ENCODE measurements at regions of chr19 and their contacts with region 1.

Region 1: DNA sequence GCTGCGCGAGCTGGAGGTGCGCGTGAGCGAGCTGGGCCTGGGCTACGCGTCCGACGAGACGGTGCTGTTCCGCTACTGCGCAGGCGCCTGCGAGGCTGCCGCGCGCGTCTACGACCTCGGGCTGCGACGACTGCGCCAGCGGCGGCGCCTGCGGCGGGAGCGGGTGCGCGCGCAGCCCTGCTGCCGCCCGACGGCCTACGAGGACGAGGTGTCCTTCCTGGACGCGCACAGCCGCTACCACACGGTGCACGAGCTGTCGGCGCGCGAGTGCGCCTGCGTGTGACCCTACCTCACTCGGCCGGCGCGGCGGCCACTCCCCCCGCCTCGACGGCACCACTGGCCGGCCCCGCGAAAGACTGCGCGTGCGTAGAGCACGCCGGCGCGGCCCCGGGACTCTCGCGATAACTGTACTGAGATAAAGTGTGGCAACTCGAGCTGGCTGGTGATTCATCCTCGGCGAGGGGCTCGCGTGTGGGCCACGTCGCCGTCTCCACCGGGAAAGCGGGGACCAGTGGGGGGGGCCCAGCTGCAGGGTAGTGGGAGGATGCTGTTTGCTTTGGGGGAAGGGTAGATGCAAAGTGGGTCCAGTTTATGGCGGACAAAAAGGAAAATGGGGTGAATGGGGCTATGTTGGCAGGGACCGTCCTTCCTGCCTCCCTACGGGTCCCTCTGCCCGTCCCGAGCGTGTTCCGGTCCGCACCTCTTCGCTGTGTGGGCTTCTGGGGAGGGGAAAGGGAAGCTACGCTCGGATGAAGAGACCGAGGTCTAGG is 11.4 kb downstream of the FUT6 start:
- DNase-seq: peak; percentile 87 to 97 (median 94)
- ATAC-seq: peak; percentile 81 to 84
- H3K4me3 Mint-ChIP-seq: peak overlapping the region; percentile 93 to 100 (median 97)
- H3K27ac Mint-ChIP-seq: peak overlapping the region; percentile 94 to 100 (median 98)
- H3K4me1 Mint-ChIP-seq: peaks cover 10 to 22% (median 19%) of the 10 kb centered on the region in 4 donors
- H3K27me3 Mint-ChIP-seq: no peaks in the 10 kb centered on the region

Region 2: GRCh38 chr19:5790573-5791520 is 37.2 kb before region 1 on chr19 and contains the start of gene DUS3L:
- POLR2A ChIA-PET with region 1: interaction called, 13 read pairs
- DNase-seq: peak; percentile 90 to 98 (median 95)
- ATAC-seq: peak; percentile 92 to 93
- H3K4me3 Mint-ChIP-seq: peak within 1 kb of the TSS; percentile 92 to 100 (median 99)
- H3K27ac Mint-ChIP-seq: peak within 1 kb of the TSS; percentile 99 to 100 (median 100)
- H3K4me1 Mint-ChIP-seq: peaks cover 13 to 21% (median 16%) of the 10 kb centered on the region in 4 donors
- H3K27me3 Mint-ChIP-seq: peaks cover 0 to 2% (median 0%) of the 10 kb centered on the region in 5 donors
- polyA plus RNA-seq, gene DUS3L: 26.3 to 43.2 (median 41.1) TPM

Region 3: GRCh38 chr19:5809053-5809452 is 19.0 kb before region 1 on chr19:
- POLR2A ChIA-PET with region 1: interaction called, 23 read pairs
- DNase-seq: no peak
- ATAC-seq: no peak
- H3K4me3 Mint-ChIP-seq: no peak overlapping the region
- H3K27ac Mint-ChIP-seq: no peak overlapping the region
- H3K4me1 Mint-ChIP-seq: peaks cover 5 to 8% (median 6%) of the 10 kb centered on the region in 4 donors
- H3K27me3 Mint-ChIP-seq: no peaks in the 10 kb centered on the region

Region 4: DNA sequence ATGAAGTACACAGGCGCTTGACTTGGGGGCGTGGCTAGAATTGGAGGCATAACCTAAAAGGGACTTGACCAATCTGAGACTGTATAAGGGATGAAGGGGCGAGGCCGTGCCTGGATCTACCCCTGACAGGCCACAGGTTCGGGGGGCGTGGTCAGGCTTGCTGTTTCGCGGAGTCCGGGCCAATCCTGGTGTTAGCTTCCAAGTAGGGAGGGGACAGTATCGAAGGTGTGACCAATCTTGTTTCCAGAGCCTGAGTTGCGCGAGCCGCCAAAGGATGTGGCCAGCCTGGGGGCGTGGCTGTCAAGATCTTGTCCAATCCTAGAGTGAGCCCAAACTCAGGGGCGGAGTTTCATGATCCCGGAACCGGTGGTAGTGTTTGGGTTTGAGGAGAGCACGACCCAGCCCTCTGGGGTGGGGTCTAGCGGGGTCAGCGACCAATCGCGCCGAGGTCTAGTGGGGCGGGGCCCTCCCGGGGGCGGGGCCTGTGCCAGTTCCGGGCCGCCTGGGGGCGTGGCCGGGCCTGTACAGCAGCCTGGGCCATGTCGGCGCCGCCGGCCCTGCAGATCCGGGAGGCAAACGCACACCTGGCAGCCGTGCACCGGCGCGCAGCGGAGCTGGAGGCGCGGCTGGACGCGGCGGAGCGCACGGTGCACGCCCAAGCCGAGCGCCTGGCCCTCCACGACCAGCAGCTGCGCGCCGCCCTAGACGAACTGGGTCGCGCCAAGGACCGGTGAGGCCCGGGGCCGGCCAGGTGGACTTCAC is 76.5 kb after region 1 on chr19 and contains the start of gene VMAC:
- POLR2A ChIA-PET with region 1: interaction called, 71 read pairs
- DNase-seq: peak; percentile 99 to 100 (median 100)
- ATAC-seq: peak; percentile 77 to 80
- H3K4me3 Mint-ChIP-seq: peak within 1 kb of the TSS; percentile 91 to 99 (median 97)
- H3K27ac Mint-ChIP-seq: peak within 1 kb of the TSS; percentile 98 to 100 (median 99)
- H3K4me1 Mint-ChIP-seq: peaks cover 19 to 57% (median 43%) of the 10 kb centered on the region in 4 donors
- H3K27me3 Mint-ChIP-seq: peaks cover 0 to 2% (median 0%) of the 10 kb centered on the region in 5 donors
- polyA plus RNA-seq, gene VMAC: 6.2 to 8.4 (median 7.0) TPM

Region 5: DNA sequence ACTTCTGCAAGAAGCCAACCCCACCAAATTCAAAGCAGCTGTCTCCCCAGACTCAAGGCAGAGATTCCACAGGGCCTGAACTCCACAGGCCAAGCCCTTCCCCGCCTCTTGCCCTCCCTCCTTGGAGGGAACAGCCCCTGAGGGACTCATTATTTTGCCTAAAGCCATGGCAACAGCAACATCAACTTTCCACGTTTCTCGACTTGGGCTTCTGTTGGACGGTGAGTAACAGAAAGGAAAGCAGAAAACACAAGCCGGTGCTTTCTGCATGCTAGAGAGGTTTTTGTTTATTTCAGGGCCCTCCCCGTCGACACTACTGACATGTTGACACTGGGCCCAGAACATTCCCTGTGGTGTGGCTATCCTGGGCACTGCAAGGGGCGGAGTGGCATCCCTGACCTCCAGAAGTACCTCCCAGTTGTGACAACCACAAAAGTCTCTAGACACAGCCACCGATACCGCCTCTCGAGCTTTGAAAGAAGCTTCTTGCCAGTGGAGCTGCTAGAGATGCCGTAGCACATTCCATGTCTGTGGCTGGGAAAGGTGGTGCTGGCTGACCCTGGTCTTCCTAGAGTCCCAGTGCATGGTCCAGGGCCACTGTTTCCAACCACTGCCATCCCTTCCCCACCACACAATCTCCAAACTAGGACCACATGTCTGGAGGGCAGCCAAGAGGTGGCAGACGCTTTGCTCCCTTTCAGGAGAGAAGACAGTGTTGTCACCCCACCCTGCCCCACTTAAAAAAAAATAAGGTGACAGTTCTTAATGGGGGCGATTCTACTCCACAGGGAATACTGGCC is 98.8 kb after region 1 on chr19:
- POLR2A ChIA-PET with region 1: no interaction called
- DNase-seq: no peak
- ATAC-seq: no peak
- H3K4me3 Mint-ChIP-seq: no peak overlapping the region
- H3K27ac Mint-ChIP-seq: no peak overlapping the region
- H3K4me1 Mint-ChIP-seq: peaks cover 0 to 7% (median 2%) of the 10 kb centered on the region in 4 donors
- H3K27me3 Mint-ChIP-seq: no peaks in the 10 kb centered on the region

Region 6: DNA sequence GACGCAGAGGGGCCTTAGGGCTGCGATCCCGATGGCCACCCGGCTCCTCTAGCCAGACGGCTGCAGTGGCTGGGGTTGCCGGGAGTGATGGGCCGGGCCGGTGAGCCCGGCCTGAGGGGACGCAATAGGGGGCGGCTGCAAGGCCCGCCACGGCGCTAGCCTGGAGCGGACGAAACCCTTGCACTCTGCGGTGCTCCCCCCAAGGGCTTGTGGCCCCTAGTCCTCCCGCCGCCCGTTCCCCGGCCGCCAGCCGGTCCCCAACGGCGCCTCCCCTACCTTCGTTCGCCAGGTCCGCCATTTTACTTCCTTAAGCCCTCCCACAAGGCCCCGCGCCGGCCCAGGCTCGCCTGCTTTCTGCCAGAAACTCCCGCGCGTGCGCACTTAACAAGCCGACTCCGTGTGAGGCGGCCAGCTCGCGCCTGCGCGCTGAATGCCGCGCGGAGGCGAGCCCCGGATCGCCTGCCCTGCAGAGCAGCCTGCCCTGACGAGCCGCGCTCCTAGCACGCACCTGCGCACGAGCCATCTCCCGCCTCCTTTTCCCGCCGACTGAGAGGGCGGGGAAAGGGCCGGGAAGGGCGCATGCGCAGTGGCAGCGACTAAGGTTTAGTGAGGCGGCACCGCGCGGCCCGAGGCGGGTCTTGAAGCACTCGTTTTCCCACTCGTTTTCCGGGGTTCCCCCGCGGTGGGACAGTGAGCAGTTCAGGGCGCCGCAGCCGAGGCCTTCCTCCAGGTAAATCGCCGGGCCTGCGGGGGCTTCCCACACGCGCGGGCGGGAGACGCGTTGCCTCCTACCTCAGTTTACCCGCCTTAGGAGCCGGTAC is 149.9 kb after region 1 on chr19 and contains the start of gene RANBP3:
- POLR2A ChIA-PET with region 1: interaction called, 11 read pairs
- DNase-seq: peak; percentile 93 to 99 (median 99)
- ATAC-seq: peak; percentile 84 to 85
- H3K4me3 Mint-ChIP-seq: peak within 1 kb of the TSS; percentile 92 to 99 (median 96)
- H3K27ac Mint-ChIP-seq: peak within 1 kb of the TSS; percentile 86 to 99 (median 96)
- H3K4me1 Mint-ChIP-seq: peaks cover 30 to 60% (median 53%) of the 10 kb centered on the region in 4 donors
- H3K27me3 Mint-ChIP-seq: peaks cover 0 to 3% (median 0%) of the 10 kb centered on the region in 5 donors
- polyA plus RNA-seq, gene RANBP3: 7.7 to 13.0 (median 9.1) TPM

Measured in naive thymus-derived CD8-positive, alpha-beta T cell (primary cell).